Cardiac septum (tissue), 1 donor: ENCODE measurements at regions of chr12 and their contacts with region 1.

Region 1: GRCh38 chr12:50085615-50086072 is 502 bp downstream of the SMARCD1 start:
- DNase-seq: no peak

Region 2: DNA sequence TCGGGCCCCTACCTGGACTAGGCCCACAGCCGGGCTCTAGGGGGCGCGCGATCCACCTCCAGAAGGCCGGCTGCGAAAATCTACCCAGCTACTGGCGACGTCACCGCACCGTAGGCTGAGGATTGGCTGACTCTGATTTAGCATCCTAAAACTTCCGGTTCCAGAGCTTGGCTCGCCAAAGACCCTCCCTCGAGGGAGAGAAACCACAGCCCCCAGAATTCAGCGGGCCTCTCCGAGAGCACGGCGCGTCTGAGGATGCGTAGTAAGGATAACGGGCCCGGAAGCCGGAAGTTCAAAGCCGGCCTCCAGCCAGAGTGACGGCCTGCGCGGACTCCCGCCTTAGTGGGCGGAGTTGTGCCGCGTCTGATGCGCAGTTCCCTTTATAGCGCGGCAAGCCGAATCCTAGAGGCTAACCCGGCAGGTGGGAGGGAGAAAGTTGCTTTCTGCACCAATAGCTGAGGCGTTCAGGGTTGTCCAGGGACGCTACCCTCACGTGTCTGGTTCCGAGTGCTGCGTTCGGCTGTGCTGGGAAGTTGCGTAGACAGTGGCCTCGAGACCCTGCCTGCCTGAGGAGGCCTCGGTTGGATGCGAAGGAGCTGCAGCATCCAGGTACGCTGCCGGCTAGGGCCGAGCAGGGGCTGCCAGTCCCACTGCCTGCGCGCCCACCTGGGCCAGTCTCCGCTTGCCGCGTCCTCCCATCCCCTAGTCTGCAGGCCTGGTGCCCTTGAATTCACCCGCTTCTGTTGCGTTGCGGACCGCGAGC is 26.2 kb after region 1 on chr12 and contains the start of gene COX14:
- intact Hi-C with region 1: loop called (anchors 2 kb)
- DNase-seq: peak; percentile 100
- total RNA-seq, gene COX14: 152 TPM

Region 3: GRCh38 chr12:50690925-50691324 is 605.3 kb after region 1 on chr12:
- intact Hi-C with region 1: no loop called
- DNase-seq: no peak